ENCODE measurements at regions of chrX and their contacts with region 1.

Region 1: GRCh38 chrX:45849253-45849862 is 648.7 kb upstream of the DIPK2B start:
- DNase-seq: peak; percentile 67
- H3K4me3 ChIP-seq: peak overlapping the region; percentile 65
- H3K27ac ChIP-seq: peak overlapping the region; percentile 70
- H3K4me1 ChIP-seq: peaks cover 14% of the 10 kb centered on the region
- H3K27me3 ChIP-seq: no peaks in the 10 kb centered on the region
- CTCF ChIP-seq: peak; percentile 59

Region 2: DNA sequence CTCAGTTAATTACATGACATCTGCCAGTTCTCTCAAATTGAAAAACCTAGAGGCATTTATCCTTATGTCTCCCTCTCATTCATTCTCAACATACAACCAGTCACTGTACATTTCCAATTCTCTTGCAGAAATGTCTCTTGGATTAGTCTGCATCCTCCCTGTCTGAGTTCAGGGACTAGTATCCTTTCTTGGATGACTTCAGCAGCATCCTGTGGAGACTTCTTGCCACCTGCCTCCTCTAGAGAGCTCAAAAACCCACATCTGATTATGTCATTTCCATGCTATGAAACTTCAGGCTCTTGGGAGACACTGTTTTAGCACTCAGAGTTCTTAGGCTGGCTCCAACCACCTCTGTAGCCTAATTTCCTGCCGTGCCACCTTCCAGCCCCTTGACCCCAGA is 133.6 kb before region 1 on chrX:
- CTCF ChIA-PET with region 1: no interaction called
- POLR2A ChIA-PET with region 1: interaction called, 11 read pairs
- intact Hi-C with region 1: no loop called
- DNase-seq: peak; percentile 46
- H3K4me3 ChIP-seq: no peak overlapping the region
- H3K27ac ChIP-seq: no peak overlapping the region
- H3K4me1 ChIP-seq: peaks cover 17% of the 10 kb centered on the region
- H3K27me3 ChIP-seq: no peaks in the 10 kb centered on the region
- CTCF ChIP-seq: no peak

Measured in A673 (cell line).